MCF 10A (cell line): ENCODE measurements at regions of chr3 and their contacts with region 1.

Region 1: GRCh38 chr3:129052675-129053074 is 7.9 kb upstream of the GP9 start:
- DNase-seq: no peak
- H3K4me3 Mint-ChIP-seq: no peak overlapping the region
- H3K27ac Mint-ChIP-seq: no peak overlapping the region
- H3K4me1 Mint-ChIP-seq: peaks cover 9% of the 10 kb centered on the region
- H3K27me3 Mint-ChIP-seq: peaks cover 16% of the 10 kb centered on the region
- CTCF ChIP-seq: no peak

Region 2: DNA sequence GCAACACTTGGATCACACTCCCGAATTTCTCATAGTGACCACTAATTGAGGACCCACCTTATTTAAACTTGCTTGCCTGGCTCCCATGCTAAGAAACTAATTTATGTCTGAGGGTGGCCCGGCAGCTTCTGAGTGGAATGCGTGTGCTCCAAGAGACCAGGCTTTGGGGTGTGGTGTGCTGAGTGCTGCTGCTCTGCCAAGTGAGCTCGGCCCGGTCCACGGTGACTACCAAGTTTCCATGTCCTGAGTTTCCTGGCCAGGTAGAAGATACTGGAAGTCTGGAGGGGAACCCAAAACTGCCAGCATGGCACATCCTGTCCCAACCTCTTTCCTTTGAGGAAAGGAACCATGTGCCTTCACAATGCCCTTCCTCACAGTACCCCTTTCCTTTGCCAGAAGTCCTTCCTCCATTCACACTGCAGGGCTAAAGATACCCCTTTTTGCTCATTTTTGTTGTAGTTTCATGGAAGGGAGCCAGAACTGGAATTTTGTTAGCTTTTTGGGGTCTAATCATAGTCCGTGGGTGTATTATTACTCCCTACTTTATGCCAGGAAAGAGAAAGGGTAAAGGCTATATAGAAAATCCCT is 232.3 kb before region 1 on chr3:
- CTCF ChIA-PET with region 1: no interaction called
- POLR2A ChIA-PET with region 1: no interaction called
- intact Hi-C with region 1: no loop called
- DNase-seq: no peak
- H3K4me3 Mint-ChIP-seq: no peak overlapping the region
- H3K27ac Mint-ChIP-seq: no peak overlapping the region
- H3K4me1 Mint-ChIP-seq: no peaks in the 10 kb centered on the region
- H3K27me3 Mint-ChIP-seq: no peaks in the 10 kb centered on the region
- CTCF ChIP-seq: no peak

Region 3: GRCh38 chr3:128946411-128946810 is 106.3 kb before region 1 on chr3:
- CTCF ChIA-PET with region 1: no interaction called
- POLR2A ChIA-PET with region 1: no interaction called
- intact Hi-C with region 1: no loop called
- DNase-seq: no peak
- H3K4me3 Mint-ChIP-seq: no peak overlapping the region
- H3K27ac Mint-ChIP-seq: no peak overlapping the region
- H3K4me1 Mint-ChIP-seq: no peaks in the 10 kb centered on the region
- H3K27me3 Mint-ChIP-seq: peaks cover 18% of the 10 kb centered on the region
- CTCF ChIP-seq: no peak

Region 4: DNA sequence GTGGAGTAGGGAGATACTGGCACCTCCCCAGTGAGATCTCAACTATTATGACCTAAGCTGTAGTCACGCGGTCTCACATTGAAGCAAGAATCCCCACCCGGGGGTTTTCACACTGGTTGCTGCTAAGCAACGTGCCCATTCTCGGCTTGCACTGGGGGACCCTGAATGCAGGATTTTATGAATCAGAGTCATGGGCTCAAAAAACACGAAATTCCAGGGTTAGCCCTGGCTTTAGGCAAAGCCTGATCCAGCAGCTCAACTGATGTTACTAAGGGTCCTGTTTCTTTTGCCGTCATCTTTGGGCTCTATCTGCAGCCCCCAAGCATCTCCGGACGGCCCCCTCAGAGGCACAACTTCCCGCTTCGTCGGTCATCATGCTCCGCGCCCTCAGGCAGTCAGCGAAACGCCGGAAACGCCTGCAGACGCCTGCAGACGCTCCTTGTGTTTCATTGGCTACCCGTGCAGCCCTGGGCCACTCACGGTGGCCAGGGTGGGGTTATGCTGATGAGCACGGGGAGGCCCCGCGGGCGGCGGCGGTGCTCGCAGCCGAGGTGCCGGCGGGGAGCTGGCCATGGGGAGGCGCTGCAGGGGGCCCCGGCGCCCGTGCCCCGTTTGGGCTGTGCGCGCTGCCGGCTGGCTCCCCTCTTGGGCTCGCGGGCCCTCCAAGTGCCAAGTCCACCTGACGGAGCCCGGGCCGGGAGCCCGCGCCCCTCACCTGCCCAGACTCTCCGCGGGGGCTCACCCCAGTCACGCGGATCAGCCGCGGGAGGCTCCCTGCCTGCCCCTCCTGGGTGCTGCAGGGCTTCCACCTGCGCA is 25.7 kb before region 1 on chr3:
- CTCF ChIA-PET with region 1: interaction called, 15 read pairs
- POLR2A ChIA-PET with region 1: no interaction called
- intact Hi-C with region 1: no loop called
- DNase-seq: peak; percentile 80
- H3K4me3 Mint-ChIP-seq: peak overlapping the region; percentile 56
- H3K27ac Mint-ChIP-seq: no peak overlapping the region
- H3K4me1 Mint-ChIP-seq: no peaks in the 10 kb centered on the region
- H3K27me3 Mint-ChIP-seq: peaks cover 16% of the 10 kb centered on the region
- CTCF ChIP-seq: peak; percentile 41

Region 5: GRCh38 chr3:129039271-129040038 is 13.2 kb before region 1 on chr3:
- CTCF ChIA-PET with region 1: interaction called, 22 read pairs
- POLR2A ChIA-PET with region 1: no interaction called
- intact Hi-C with region 1: no loop called
- DNase-seq: peak; percentile 40
- H3K4me3 Mint-ChIP-seq: no peak overlapping the region
- H3K27ac Mint-ChIP-seq: no peak overlapping the region
- H3K4me1 Mint-ChIP-seq: no peaks in the 10 kb centered on the region
- H3K27me3 Mint-ChIP-seq: peaks cover 12% of the 10 kb centered on the region
- CTCF ChIP-seq: no peak

Region 6: GRCh38 chr3:129068291-129068886 is 15.7 kb after region 1 on chr3:
- CTCF ChIA-PET with region 1: interaction called, 25 read pairs
- POLR2A ChIA-PET with region 1: interaction called, 3 read pairs
- intact Hi-C with region 1: no loop called
- DNase-seq: no peak
- H3K4me3 Mint-ChIP-seq: no peak overlapping the region
- H3K27ac Mint-ChIP-seq: no peak overlapping the region
- H3K4me1 Mint-ChIP-seq: no peaks in the 10 kb centered on the region
- H3K27me3 Mint-ChIP-seq: no peaks in the 10 kb centered on the region
- CTCF ChIP-seq: no peak

Region 7: GRCh38 chr3:129120254-129121004 is 67.8 kb after region 1 on chr3:
- CTCF ChIA-PET with region 1: interaction called, 67 read pairs
- POLR2A ChIA-PET with region 1: interaction called, 33 read pairs
- intact Hi-C with region 1: loop called (anchors 2 kb)
- DNase-seq: peak; percentile 98
- H3K4me3 Mint-ChIP-seq: peak overlapping the region; percentile 77
- H3K27ac Mint-ChIP-seq: peak overlapping the region; percentile 82
- H3K4me1 Mint-ChIP-seq: peaks cover 26% of the 10 kb centered on the region
- H3K27me3 Mint-ChIP-seq: no peaks in the 10 kb centered on the region
- CTCF ChIP-seq: no peak

Region 8: DNA sequence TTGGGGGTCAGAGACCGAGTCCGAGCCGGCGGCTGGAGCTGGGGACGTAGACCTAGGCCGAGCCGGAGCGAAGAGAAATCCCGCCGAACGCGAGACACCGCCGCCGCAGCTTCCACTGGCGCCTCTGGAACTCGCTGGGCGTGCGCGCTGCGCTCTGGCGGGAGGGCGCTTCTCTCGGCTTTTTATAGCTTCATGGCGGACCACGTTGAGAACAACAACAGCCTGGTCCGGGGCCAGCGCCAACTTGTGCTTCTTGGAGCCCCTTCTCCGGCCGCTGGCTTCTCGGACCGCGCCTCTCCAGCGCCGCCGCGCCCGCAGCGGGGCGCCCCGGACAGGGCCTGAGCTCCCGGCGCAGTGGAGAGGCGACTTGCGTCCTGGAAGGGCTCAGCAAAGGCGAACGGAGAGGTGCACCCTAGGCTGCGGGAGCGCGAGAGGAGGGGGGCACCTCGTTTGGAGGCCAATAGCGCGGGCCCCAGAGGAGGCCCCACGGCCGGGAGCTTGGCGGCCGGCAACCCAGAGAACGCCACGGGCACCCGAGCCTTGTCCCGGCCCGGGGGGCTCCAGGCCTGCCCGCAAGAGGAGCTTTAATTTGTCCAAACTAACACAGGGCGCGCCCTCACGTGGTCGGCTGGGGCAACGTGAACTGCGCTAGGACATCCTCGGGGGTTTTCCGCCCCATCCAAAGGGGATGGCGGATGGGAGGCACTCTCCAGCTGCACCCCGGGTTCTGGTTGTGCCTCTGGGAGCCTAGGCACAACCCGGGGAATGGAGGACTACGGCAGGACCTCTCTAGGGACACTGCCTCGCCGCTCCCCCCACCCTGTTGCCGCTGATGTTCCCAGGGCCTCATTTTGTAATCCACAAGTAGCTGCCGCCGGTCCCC is 263.7 kb after region 1 on chr3:
- CTCF ChIA-PET with region 1: interaction called, 3 read pairs
- POLR2A ChIA-PET with region 1: interaction called, 7 read pairs
- intact Hi-C with region 1: loop called (anchors 2 kb)
- DNase-seq: peak; percentile 82
- H3K4me3 Mint-ChIP-seq: peak overlapping the region; percentile 81
- H3K27ac Mint-ChIP-seq: peak overlapping the region; percentile 87
- H3K4me1 Mint-ChIP-seq: peaks cover 6% of the 10 kb centered on the region
- H3K27me3 Mint-ChIP-seq: no peaks in the 10 kb centered on the region
- CTCF ChIP-seq: peak; percentile 49